ENCODE measurements at regions of chr10 and their contacts with region 1.

Region 1: GRCh38 chr10:54402576-54402975 is 398.5 kb downstream of the PCDH15 start:
- DNase-seq: no peak
- H3K4me3 ChIP-seq: no peak overlapping the region
- H3K27ac ChIP-seq: no peak overlapping the region
- H3K4me1 ChIP-seq: no peaks in the 10 kb centered on the region
- H3K27me3 ChIP-seq: no peaks in the 10 kb centered on the region
- CTCF ChIP-seq: peak in 1 of 4 experiments; percentile 19
- EP300 ChIP-seq: no peak
- POLR2A ChIP-seq: no peak

Region 2: GRCh38 chr10:53598914-53599313 is 803.7 kb before region 1 on chr10:
- intact Hi-C with region 1: no loop called
- DNase-seq: no peak
- H3K4me3 ChIP-seq: no peak overlapping the region
- H3K27ac ChIP-seq: no peak overlapping the region
- H3K4me1 ChIP-seq: no peaks in the 10 kb centered on the region
- H3K27me3 ChIP-seq: no peaks in the 10 kb centered on the region
- CTCF ChIP-seq: no peak
- EP300 ChIP-seq: no peak
- POLR2A ChIP-seq: no peak

Region 3: DNA sequence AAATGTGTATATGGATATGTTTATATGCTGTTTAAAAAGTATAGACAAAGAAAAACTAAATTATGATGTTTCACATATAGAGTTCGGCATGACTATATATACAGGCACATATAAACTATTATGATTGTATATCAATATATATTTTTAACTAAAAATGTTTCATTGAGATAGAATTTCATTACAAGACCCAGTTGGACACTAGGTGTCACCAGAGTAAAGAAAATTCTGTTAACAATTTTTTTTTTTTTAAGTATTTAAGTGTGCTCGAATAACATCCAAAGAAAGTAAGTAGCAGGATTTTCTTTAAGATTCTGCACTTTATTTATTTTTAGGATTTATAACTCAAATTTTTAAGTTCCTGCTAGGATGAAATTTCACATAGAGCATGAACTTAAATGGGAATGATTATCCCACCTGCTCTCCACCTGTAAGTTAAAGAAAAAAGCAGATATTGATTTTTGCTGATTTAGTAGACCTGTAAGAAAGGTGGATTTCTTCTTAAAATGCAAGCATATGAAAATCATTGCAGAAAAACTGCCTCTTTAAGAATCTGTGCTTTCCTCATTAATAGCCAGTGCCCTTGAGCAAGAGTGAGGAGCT is 563.0 kb before region 1 on chr10:
- intact Hi-C with region 1: loop called (anchors 10 kb)
- DNase-seq: no peak
- H3K4me3 ChIP-seq: no peak overlapping the region
- H3K27ac ChIP-seq: no peak overlapping the region
- H3K4me1 ChIP-seq: peaks cover 0 to 9% (median 4%) of the 10 kb centered on the region in 4 donors
- H3K27me3 ChIP-seq: no peaks in the 10 kb centered on the region
- CTCF ChIP-seq: peak in 1 of 4 experiments; percentile 18
- EP300 ChIP-seq: no peak
- POLR2A ChIP-seq: no peak

Region 4: DNA sequence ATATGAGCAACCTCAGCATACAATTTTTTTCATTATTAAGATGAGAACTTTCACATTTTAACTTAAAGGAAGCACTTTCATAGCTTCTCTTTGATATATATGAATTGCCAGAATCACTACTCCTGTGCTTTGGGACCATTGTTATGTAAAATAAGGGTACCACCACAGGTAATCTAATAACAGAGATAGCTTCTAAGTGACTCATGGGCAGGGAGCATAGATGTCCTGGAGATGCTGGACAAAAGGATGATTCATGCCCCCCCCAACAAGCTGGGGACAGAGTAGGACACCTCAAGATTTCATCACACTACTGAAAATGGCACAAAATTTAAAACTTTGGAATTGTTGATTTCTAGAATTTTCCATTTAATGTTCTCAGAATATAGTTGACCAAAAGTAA is 242.7 kb before region 1 on chr10:
- intact Hi-C with region 1: no loop called
- DNase-seq: no peak
- H3K4me3 ChIP-seq: no peak overlapping the region
- H3K27ac ChIP-seq: no peak overlapping the region
- H3K4me1 ChIP-seq: no peaks in the 10 kb centered on the region
- H3K27me3 ChIP-seq: no peaks in the 10 kb centered on the region
- CTCF ChIP-seq: no peak
- EP300 ChIP-seq: no peak
- POLR2A ChIP-seq: no peak

Region 5: DNA sequence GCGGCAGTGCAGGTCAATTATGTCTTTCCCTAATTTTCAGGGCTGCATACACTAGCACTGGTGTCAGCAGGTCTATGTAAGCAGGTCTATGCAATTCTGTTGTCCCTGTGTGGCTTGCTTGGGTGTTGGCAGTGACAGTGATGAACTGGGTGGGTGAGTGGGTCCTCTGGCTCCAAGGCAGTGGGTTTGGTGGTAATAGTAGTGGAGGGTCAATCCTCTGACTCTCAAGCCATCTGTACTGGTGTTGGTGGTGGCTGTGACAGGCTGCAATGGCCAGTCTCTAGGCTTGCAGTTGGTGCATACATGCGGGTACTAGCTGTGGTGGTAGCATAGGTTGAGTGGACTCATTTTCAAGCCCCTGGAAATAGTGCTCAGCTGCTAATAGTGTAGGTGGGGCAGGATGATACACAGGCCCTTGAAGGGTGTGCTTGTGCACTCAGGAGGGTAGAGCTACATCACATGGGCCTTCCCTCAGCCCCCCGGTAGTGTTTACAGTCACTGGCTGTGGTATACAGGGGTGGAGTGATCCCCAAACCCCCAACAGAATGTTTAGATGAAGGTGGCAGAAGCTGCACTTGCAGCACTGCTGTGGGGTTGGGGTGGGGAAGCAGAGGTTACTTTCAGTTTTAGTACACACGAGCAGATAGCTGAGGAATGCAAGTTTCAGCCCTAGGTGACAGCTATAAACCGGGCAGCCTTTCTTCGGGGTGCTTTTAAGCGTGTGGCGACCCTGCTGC is 67.2 kb after region 1 on chr10:
- intact Hi-C with region 1: no loop called
- DNase-seq: no peak
- H3K4me3 ChIP-seq: no peak overlapping the region
- H3K27ac ChIP-seq: no peak overlapping the region
- H3K4me1 ChIP-seq: no peaks in the 10 kb centered on the region
- H3K27me3 ChIP-seq: no peaks in the 10 kb centered on the region
- CTCF ChIP-seq: no peak
- EP300 ChIP-seq: no peak
- POLR2A ChIP-seq: no peak

Measured in sigmoid colon (tissue), 7 donors.